Naive thymus-derived CD4-positive, alpha-beta T cell (primary cell): ENCODE measurements at regions of chr16 and their contacts with region 1.

Region 1: DNA sequence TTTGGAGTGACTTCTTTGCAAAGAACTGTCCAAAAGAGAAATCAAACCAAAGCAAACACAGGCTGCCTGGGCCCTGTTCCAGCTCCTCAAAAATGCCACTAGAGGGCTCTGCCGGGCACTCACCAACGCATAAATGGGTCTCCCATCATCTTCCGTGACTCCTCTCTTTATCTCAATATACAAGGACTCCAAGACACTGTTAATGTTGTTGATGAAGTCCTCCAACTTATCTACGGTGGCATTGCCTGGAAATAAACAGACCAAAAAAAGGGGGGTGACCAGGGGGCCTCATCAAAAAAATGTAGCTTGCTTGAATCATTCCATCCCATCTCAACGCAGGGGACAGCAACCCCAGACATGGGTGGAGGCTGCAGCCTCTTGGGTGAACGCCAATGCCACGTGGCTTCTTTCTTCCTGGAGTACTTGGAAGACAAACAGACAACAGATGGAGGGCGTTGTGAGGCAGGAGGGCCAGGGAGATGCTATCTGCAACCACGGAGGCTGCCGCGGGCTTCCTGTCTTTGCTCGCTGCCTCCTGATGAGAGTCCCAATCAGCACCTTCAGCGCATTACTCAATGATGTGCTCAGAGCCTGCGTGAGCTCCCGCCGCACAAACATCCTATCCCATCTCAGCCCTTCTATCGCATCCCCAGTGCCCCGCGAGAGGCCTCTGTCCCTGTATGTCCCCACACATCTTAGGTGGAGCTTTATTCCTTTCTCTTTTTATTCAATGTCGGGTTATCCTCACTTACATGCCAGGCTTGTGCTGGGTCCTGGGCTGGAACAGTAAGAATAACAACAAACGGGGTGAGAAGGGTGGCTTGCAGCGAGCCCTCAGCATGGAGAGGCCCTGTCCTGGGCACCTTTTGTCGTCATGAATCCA is 32.0 kb downstream of the KDM8 start:
- DNase-seq: peak; percentile 61 to 97 (median 96)
- ATAC-seq: peak; percentile 82
- H3K4me3 ChIP-seq: peak overlapping the region; percentile 29
- H3K4me3 Mint-ChIP-seq: peak overlapping the region; percentile 77 to 88 (median 84)
- H3K27ac ChIP-seq: peak overlapping the region; percentile 97
- H3K27ac Mint-ChIP-seq: peak overlapping the region; percentile 91 to 100 (median 99)
- H3K4me1 ChIP-seq: peaks cover 82 to 84% of the 10 kb centered on the region in 2 donors
- H3K4me1 Mint-ChIP-seq: peaks cover 70 to 98% (median 90%) of the 10 kb centered on the region in 7 donors
- H3K27me3 ChIP-seq: no peaks in the 10 kb centered on the region
- H3K27me3 Mint-ChIP-seq: no peaks in the 10 kb centered on the region

Region 2: DNA sequence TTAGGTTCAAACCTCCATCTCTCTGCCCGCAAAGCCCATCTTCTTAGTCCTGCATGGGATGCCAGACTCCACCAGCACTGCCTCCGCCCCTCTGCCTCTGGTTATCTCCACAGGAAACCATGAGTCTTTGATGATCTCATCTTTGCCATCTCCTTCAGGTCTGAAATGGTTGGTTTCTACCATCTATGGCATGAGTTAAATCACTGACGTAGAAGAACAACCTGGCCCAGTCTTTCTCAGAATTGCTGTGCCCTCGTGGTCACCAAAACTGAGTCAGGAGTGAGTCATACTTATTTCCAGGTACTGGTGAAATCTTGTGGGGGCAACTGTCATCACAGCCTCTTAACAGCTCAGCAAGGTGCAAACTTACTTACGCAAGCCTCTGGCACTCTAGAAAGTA is 637.2 kb before region 1 on chr16:
- CTCF ChIA-PET with region 1: no interaction called
- POLR2A ChIA-PET with region 1: no interaction called
- intact Hi-C with region 1: loop called in 1 of 2 experiments (anchors 1 kb)
- DNase-seq: peak in 7 of 9 donors; percentile 7 to 72 (median 24)
- ATAC-seq: peak; percentile 86
- H3K4me3 ChIP-seq: no peak overlapping the region
- H3K4me3 Mint-ChIP-seq: peak overlapping the region in 1 of 10 donors; percentile 74
- H3K27ac ChIP-seq: no peak overlapping the region
- H3K27ac Mint-ChIP-seq: peak overlapping the region in 3 of 9 donors; percentile 15 to 96 (median 69)
- H3K4me1 ChIP-seq: peaks cover 0 to 20% of the 10 kb centered on the region in 2 donors
- H3K4me1 Mint-ChIP-seq: peaks cover 4 to 75% (median 9%) of the 10 kb centered on the region in 7 donors
- H3K27me3 ChIP-seq: no peaks in the 10 kb centered on the region
- H3K27me3 Mint-ChIP-seq: peaks cover 0 to 19% (median 0%) of the 10 kb centered on the region in 5 donors

Region 3: GRCh38 chr16:27203429-27204231 is 31.7 kb before region 1 on chr16 and contains the start of gene KDM8:
- CTCF ChIA-PET with region 1: interaction called, 19 read pairs
- POLR2A ChIA-PET with region 1: interaction called, 128 read pairs
- intact Hi-C with region 1: loop called (anchors 1 kb)
- DNase-seq: peak; percentile 96 to 100 (median 100)
- ATAC-seq: peak; percentile 88
- H3K4me3 ChIP-seq: peak within 1 kb of the TSS; percentile 97
- H3K4me3 Mint-ChIP-seq: peak within 1 kb of the TSS; percentile 91 to 100 (median 98)
- H3K27ac ChIP-seq: peak within 1 kb of the TSS; percentile 93
- H3K27ac Mint-ChIP-seq: peak within 1 kb of the TSS; percentile 94 to 100 (median 100)
- H3K4me1 ChIP-seq: peaks cover 40 to 50% of the 10 kb centered on the region in 2 donors
- H3K4me1 Mint-ChIP-seq: peaks cover 41 to 70% (median 60%) of the 10 kb centered on the region in 7 donors
- H3K27me3 ChIP-seq: no peaks in the 10 kb centered on the region
- H3K27me3 Mint-ChIP-seq: peaks cover 0 to 3% (median 0%) of the 10 kb centered on the region in 5 donors
- total RNA-seq, gene KDM8: 15.6 to 34.4 (median 19.0) TPM

Region 4: GRCh38 chr16:27313422-27314160 is 78.3 kb after region 1 on chr16 and contains the start of gene IL4R:
- CTCF ChIA-PET with region 1: interaction called, 107 read pairs
- POLR2A ChIA-PET with region 1: interaction called, 139 read pairs
- intact Hi-C with region 1: loop called (anchors 1 kb)
- DNase-seq: peak; percentile 55 to 84 (median 68)
- ATAC-seq: peak; percentile 72
- H3K4me3 ChIP-seq: peak within 1 kb of the TSS; percentile 73
- H3K4me3 Mint-ChIP-seq: peak within 1 kb of the TSS; percentile 87 to 99 (median 97)
- H3K27ac ChIP-seq: peak within 1 kb of the TSS; percentile 99
- H3K27ac Mint-ChIP-seq: peak within 1 kb of the TSS; percentile 92 to 99 (median 96)
- H3K4me1 ChIP-seq: peaks cover 17 to 33% of the 10 kb centered on the region in 2 donors
- H3K4me1 Mint-ChIP-seq: peaks cover 29 to 52% (median 42%) of the 10 kb centered on the region in 7 donors
- H3K27me3 ChIP-seq: no peaks in the 10 kb centered on the region
- H3K27me3 Mint-ChIP-seq: peaks cover 0 to 3% (median 0%) of the 10 kb centered on the region in 5 donors
- total RNA-seq, gene IL4R: 158 to 498 (median 198) TPM

Region 5: DNA sequence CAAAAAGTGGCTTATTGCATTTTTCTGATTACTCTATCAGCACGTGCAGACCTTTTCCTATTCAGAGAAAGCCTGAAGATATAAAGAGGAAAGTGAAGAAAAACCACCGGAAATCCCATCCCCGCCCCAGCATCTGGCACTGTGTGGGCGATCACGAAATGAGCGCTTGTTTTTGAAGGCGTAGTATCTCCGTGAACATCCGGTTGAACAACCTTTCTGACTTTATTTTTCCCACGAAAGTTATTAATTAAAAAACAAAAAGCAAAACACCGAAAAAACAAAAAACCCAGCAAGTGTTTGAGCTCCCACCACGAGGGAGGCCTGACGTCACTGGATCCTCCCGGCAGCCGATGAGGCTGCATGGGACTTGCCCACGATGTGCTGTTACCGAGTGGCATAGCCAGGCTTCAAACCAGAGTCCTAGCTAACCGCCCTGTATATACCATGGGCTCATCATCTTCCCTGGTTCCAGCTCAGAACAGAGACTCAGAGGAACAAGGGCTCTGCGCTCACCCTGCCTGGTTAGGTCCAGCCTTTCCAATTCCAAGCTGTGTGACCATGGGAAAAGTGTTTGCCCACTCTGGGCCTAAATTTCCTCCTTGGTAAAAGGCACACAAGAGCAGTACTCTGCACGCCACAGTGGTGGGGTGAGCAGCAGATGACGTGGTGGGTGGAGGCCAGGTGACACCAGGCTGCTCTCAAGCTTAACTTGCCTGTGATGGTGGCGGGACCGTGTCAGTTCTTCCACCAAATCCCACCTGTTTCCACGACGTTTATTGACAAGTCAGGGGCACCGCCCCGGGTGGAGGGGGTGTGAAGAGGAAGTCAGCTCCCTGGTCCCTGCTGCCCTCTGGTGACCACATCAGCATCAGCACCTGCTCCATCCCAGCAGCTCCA is 132.4 kb after region 1 on chr16:
- CTCF ChIA-PET with region 1: interaction called, 59 read pairs
- POLR2A ChIA-PET with region 1: interaction called, 196 read pairs
- intact Hi-C with region 1: loop called (anchors 1 kb)
- DNase-seq: peak; percentile 64 to 98 (median 93)
- ATAC-seq: peak; percentile 89
- H3K4me3 ChIP-seq: peak overlapping the region; percentile 45
- H3K4me3 Mint-ChIP-seq: peak overlapping the region; percentile 54 to 86 (median 73)
- H3K27ac ChIP-seq: peak overlapping the region; percentile 99
- H3K27ac Mint-ChIP-seq: peak overlapping the region in 7 of 9 donors; percentile 93 to 100 (median 99)
- H3K4me1 ChIP-seq: peaks cover 26 to 62% of the 10 kb centered on the region in 2 donors
- H3K4me1 Mint-ChIP-seq: peaks cover 15 to 80% (median 73%) of the 10 kb centered on the region in 7 donors
- H3K27me3 ChIP-seq: no peaks in the 10 kb centered on the region
- H3K27me3 Mint-ChIP-seq: no peaks in the 10 kb centered on the region

Region 6: GRCh38 chr16:27455700-27456099 is 220.4 kb after region 1 on chr16:
- CTCF ChIA-PET with region 1: interaction called, 22 read pairs
- POLR2A ChIA-PET with region 1: interaction called, 7 read pairs
- intact Hi-C with region 1: loop called (anchors 1 kb)
- DNase-seq: peak in 6 of 9 donors; percentile 22 to 47 (median 32)
- ATAC-seq: peak; percentile 18
- H3K4me3 ChIP-seq: no peak overlapping the region
- H3K4me3 Mint-ChIP-seq: peak overlapping the region in 9 of 10 donors; percentile 3 to 75 (median 23)
- H3K27ac ChIP-seq: no peak overlapping the region
- H3K27ac Mint-ChIP-seq: peak overlapping the region; percentile 54 to 87 (median 79)
- H3K4me1 ChIP-seq: peaks cover 24 to 46% of the 10 kb centered on the region in 2 donors
- H3K4me1 Mint-ChIP-seq: peaks cover 30 to 75% (median 51%) of the 10 kb centered on the region in 7 donors
- H3K27me3 ChIP-seq: no peaks in the 10 kb centered on the region
- H3K27me3 Mint-ChIP-seq: no peaks in the 10 kb centered on the region